Activated CD4-positive, alpha-beta memory T cell treated with anti-CD3 and anti-CD28 coated beads, Interleukin-2, amount 10 ng/mL, durations not matched to agents 7 days and 5 days (primary cell): ENCODE measurements at regions of chr17 and their contacts with region 1.

Region 1: GRCh38 chr17:4891411-4892342 is 7.7 kb upstream of the C17orf107 start:
- DNase-seq: no peak
- H3K4me3 Mint-ChIP-seq: no peak overlapping the region
- H3K27ac Mint-ChIP-seq: no peak overlapping the region
- H3K4me1 Mint-ChIP-seq: peaks cover 2% of the 10 kb centered on the region
- H3K27me3 Mint-ChIP-seq: no peaks in the 10 kb centered on the region

Region 2: GRCh38 chr17:4903051-4903818 is 11.6 kb after region 1 on chr17 and contains the start of gene CHRNE:
- CTCF ChIA-PET with region 1: interaction called, 20 read pairs
- POLR2A ChIA-PET with region 1: no interaction called
- DNase-seq: peak; percentile 81
- H3K4me3 Mint-ChIP-seq: peak within 1 kb of the TSS; percentile 2
- H3K27ac Mint-ChIP-seq: peak within 1 kb of the TSS; percentile 8
- H3K4me1 Mint-ChIP-seq: peaks cover 40% of the 10 kb centered on the region
- H3K27me3 Mint-ChIP-seq: peaks cover 11% of the 10 kb centered on the region
- total RNA-seq, gene CHRNE: 0.33 to 0.43 TPM